ENCODE measurements at regions of chr6 and their contacts with region 1.

Region 1: GRCh38 chr6:5053038-5053437 is 32.1 kb upstream of the PPP1R3G start:
- DNase-seq: no peak
- ATAC-seq: no peak
- H3K4me3 ChIP-seq: no peak overlapping the region
- H3K27ac ChIP-seq: no peak overlapping the region
- H3K4me1 ChIP-seq: peaks cover 0 to 10% (median 0%) of the 10 kb centered on the region in 9 donors
- H3K27me3 ChIP-seq: no peaks in the 10 kb centered on the region
- CTCF ChIP-seq: no peak

Region 2: DNA sequence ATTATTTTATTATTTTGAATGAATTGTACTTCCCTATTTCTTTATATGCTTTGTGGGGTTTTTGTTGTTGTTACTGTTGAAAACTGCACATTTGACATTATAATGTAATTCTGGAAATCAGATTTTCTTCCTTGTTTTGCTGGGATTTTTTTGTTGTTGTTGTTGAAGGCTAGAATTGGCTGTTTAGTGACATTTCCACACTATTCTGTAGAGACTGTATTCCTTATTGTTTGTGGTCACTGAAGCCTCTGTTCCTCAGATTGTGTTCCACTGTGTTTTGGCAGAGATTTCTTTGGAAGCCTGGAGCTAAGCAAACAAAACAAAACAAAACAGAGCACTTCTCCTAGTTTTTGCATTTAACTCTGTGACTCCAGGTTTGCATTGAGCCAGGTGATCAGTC is 223.9 kb before region 1 on chr6:
- intact Hi-C with region 1: no loop called
- DNase-seq: no peak
- ATAC-seq: no peak
- H3K4me3 ChIP-seq: no peak overlapping the region
- H3K27ac ChIP-seq: no peak overlapping the region
- H3K4me1 ChIP-seq: no peaks in the 10 kb centered on the region
- H3K27me3 ChIP-seq: no peaks in the 10 kb centered on the region
- CTCF ChIP-seq: no peak

Region 3: GRCh38 chr6:5072440-5072839 is 19.4 kb after region 1 on chr6:
- intact Hi-C with region 1: loop called in 1 of 10 experiments (anchors 1 kb)
- DNase-seq: no peak
- ATAC-seq: no peak
- H3K4me3 ChIP-seq: no peak overlapping the region
- H3K27ac ChIP-seq: no peak overlapping the region
- H3K4me1 ChIP-seq: no peaks in the 10 kb centered on the region
- H3K27me3 ChIP-seq: no peaks in the 10 kb centered on the region
- CTCF ChIP-seq: no peak

Region 4: GRCh38 chr6:5115168-5115567 is 62.1 kb after region 1 on chr6:
- intact Hi-C with region 1: loop called in 1 of 10 experiments (anchors 10 kb)
- DNase-seq: peak in 1 of 2 donors; percentile 41
- ATAC-seq: peak in 6 of 8 donors; percentile 26 to 73 (median 48)
- H3K4me3 ChIP-seq: no peak overlapping the region
- H3K27ac ChIP-seq: no peak overlapping the region
- H3K4me1 ChIP-seq: peaks cover 0 to 9% (median 3%) of the 10 kb centered on the region in 9 donors
- H3K27me3 ChIP-seq: no peaks in the 10 kb centered on the region
- CTCF ChIP-seq: peak; percentile 11 to 60 (median 40)

Region 5: DNA sequence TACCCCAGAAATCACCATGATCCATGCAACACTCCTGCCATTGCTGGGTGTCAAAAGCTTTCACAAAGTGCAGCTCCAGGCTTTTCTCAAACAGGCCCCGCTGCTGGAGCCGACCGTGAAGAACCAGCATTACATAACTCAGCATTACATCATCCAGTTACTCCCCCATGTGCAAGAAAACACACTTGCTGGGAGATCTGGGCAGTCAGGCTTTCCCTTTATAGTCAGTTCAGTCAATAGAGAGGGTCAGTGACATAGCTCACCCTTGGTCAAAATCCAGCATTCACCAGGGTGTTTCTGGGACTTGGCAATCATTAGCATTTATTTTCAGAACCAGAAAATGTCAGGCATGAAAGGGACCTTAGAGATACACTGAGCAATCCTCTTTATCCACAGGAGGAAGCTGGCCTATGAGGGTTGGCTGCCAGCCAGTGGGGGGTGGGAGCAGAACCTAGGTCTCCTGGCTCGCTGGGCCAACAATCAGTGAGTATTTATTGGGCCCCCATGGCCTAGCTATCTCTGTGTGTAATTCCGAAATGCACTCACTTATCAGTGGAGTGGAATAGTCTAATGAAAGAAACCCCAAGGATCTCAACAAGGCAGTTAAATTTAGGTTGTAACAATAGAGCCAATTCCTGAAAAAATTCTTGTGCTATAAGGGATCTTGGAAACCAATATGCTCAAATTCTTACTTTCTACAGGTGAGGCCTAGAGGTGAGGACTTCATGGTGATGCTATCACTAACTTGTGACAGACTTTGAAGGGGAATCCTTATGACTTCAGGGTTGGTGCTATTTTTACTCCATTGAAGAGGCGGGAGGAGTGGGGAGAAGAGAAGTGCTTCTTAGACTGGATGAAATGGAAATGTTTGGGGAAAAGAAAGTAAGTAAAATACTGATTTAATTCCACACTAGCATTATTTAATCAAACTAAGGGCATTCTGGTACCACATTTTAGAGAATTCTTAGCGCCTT is 153.1 kb after region 1 on chr6:
- intact Hi-C with region 1: loop called in 2 of 10 experiments (anchors 10 kb)
- DNase-seq: peak; percentile 67 to 80
- ATAC-seq: peak; percentile 86 to 92 (median 90)
- H3K4me3 ChIP-seq: no peak overlapping the region
- H3K27ac ChIP-seq: peak overlapping the region; percentile 47 to 92 (median 82)
- H3K4me1 ChIP-seq: peaks cover 19 to 75% (median 57%) of the 10 kb centered on the region in 9 donors
- H3K27me3 ChIP-seq: no peaks in the 10 kb centered on the region
- CTCF ChIP-seq: no peak

Region 6: DNA sequence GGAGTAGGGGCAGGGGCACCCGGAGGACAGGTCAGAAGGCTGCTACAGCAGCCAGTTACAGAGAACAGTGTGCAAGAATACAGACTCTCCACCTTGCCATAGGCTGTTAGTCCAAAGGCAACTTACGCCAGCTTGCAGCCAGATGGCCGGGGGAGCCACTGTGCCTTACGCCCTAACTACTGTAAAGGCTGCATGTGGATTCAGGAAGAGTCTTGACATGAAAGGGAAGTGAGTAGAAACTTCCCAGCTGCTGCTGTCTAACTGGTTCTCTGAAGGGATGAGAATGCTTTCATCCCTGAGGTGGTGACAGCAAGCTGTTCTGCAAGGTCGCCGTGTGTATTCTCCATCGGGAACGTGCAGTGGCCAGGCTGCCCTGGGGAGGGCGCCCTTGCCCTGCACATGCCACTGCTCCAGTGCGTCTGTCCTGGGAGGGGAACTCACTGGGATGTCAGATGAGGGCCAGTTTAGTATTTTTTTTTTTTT is 161.6 kb after region 1 on chr6:
- intact Hi-C with region 1: loop called in 2 of 10 experiments (anchors 10 kb)
- DNase-seq: peak; percentile 34 to 60
- ATAC-seq: peak; percentile 84 to 95 (median 92)
- H3K4me3 ChIP-seq: no peak overlapping the region
- H3K27ac ChIP-seq: peak overlapping the region in 6 of 10 donors; percentile 7 to 38 (median 30)
- H3K4me1 ChIP-seq: peaks cover 0 to 48% (median 16%) of the 10 kb centered on the region in 9 donors
- H3K27me3 ChIP-seq: no peaks in the 10 kb centered on the region
- CTCF ChIP-seq: peak; percentile 37 to 79 (median 70)

Region 7: GRCh38 chr6:5398530-5398929 is 345.5 kb after region 1 on chr6:
- intact Hi-C with region 1: loop called in 2 of 10 experiments (anchors 10 kb)
- DNase-seq: no peak
- ATAC-seq: peak in 1 of 8 donors; percentile 25
- H3K4me3 ChIP-seq: no peak overlapping the region
- H3K27ac ChIP-seq: no peak overlapping the region
- H3K4me1 ChIP-seq: peaks cover 0 to 9% (median 0%) of the 10 kb centered on the region in 9 donors
- H3K27me3 ChIP-seq: no peaks in the 10 kb centered on the region
- CTCF ChIP-seq: peak in 8 of 9 donors; percentile 23 to 63 (median 56)

Measured in heart right ventricle (tissue), 16 donors.